ENCODE measurements at regions of chr6 and their contacts with region 1.

Region 1: GRCh38 chr6:130885392-130886192 is 58.4 kb downstream of the SMLR1 start:
- DNase-seq: peak; percentile 85
- ATAC-seq: peak; percentile 87
- H3K4me3 Mint-ChIP-seq: no peak overlapping the region
- H3K27ac Mint-ChIP-seq: no peak overlapping the region
- H3K4me1 Mint-ChIP-seq: no peaks in the 10 kb centered on the region
- H3K27me3 Mint-ChIP-seq: no peaks in the 10 kb centered on the region

Region 2: GRCh38 chr6:130730600-130730999 is 155.0 kb before region 1 on chr6:
- CTCF ChIA-PET with region 1: no interaction called
- POLR2A ChIA-PET with region 1: no interaction called
- DNase-seq: no peak
- ATAC-seq: no peak
- H3K4me3 Mint-ChIP-seq: no peak overlapping the region
- H3K27ac Mint-ChIP-seq: peak overlapping the region; percentile 35
- H3K4me1 Mint-ChIP-seq: peaks cover 17% of the 10 kb centered on the region
- H3K27me3 Mint-ChIP-seq: no peaks in the 10 kb centered on the region

Region 3: DNA sequence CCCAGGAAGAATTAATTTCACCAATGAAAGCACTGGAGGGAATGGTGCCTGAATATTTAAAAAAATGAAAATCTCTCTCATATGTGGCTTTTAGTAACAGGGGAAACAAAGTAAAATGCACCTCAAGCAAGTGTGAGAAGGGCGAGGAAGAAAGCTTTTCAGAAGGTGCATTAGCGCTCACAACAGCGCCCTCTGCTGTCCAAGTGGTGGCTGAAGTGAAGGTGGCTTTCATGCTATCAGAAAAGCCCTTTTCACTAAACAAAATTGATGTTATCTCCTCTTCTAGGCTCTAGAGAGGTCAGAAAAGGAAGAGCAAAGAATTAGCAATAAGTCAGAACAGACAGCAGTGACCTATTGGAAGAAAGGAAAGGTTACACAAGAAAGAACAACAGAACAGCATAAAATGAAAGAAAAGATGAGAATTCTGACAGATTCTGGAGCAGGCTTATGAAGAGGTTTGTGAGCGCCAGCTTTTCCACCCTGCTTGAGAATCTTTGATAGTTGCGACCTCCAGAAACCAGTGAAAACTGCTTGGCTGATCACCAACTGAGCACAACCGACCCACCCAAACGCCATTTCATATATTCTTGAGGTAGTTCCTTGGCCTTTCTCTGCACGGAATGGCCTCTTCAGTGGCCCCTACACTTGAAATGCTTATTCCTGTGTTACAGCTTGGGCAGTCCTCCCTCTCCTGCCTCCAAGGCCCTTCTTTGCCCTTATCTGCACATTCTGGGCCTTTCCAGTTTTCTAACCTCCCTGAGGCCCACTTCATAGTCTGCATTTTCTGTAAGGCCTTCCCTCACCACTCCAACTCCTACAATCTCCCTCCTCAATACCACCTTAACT is 13.1 kb before region 1 on chr6:
- CTCF ChIA-PET with region 1: interaction called, 26 read pairs
- POLR2A ChIA-PET with region 1: no interaction called
- DNase-seq: peak; percentile 83
- ATAC-seq: no peak
- H3K4me3 Mint-ChIP-seq: no peak overlapping the region
- H3K27ac Mint-ChIP-seq: no peak overlapping the region
- H3K4me1 Mint-ChIP-seq: peaks cover 4% of the 10 kb centered on the region
- H3K27me3 Mint-ChIP-seq: no peaks in the 10 kb centered on the region

Region 4: DNA sequence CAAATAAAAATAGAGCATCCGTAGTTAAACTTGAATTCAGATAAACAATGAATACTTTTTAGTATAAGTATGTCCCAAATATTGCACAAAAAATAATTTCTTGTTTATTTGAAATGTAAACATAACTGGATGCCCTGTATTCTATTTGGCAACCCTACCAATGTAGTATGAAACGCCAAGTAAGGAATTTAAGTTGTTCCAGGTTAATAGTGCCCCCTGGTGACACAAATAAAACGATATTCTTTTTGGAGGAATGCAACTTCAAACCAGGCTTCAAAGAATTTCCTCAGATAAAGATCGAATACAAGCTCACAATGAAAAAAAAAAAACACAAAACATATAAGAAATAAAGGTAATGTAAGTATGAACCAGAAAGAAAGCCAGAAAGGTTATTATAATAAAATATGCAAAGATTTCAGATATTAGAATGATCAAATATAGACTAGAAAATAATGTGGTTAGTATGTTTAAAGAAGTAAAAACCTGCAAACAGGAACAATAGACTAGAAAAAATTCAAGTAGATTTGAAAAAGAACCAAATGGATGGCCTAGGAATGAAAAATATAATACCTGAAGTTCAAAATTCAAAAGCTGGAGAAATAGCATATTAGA is 231.3 kb after region 1 on chr6:
- CTCF ChIA-PET with region 1: interaction called, 97 read pairs
- POLR2A ChIA-PET with region 1: no interaction called
- DNase-seq: no peak
- ATAC-seq: no peak
- H3K4me3 Mint-ChIP-seq: no peak overlapping the region
- H3K27ac Mint-ChIP-seq: no peak overlapping the region
- H3K4me1 Mint-ChIP-seq: no peaks in the 10 kb centered on the region
- H3K27me3 Mint-ChIP-seq: no peaks in the 10 kb centered on the region

Region 5: GRCh38 chr6:131182991-131183425 is 297.4 kb after region 1 on chr6:
- CTCF ChIA-PET with region 1: interaction called, 15 read pairs
- POLR2A ChIA-PET with region 1: no interaction called
- DNase-seq: peak; percentile 55
- ATAC-seq: peak; percentile 88
- H3K4me3 Mint-ChIP-seq: no peak overlapping the region
- H3K27ac Mint-ChIP-seq: peak overlapping the region; percentile 96
- H3K4me1 Mint-ChIP-seq: peaks cover 11% of the 10 kb centered on the region
- H3K27me3 Mint-ChIP-seq: no peaks in the 10 kb centered on the region